ENCODE measurements at regions of chr4 and their contacts with region 1.

Region 1: DNA sequence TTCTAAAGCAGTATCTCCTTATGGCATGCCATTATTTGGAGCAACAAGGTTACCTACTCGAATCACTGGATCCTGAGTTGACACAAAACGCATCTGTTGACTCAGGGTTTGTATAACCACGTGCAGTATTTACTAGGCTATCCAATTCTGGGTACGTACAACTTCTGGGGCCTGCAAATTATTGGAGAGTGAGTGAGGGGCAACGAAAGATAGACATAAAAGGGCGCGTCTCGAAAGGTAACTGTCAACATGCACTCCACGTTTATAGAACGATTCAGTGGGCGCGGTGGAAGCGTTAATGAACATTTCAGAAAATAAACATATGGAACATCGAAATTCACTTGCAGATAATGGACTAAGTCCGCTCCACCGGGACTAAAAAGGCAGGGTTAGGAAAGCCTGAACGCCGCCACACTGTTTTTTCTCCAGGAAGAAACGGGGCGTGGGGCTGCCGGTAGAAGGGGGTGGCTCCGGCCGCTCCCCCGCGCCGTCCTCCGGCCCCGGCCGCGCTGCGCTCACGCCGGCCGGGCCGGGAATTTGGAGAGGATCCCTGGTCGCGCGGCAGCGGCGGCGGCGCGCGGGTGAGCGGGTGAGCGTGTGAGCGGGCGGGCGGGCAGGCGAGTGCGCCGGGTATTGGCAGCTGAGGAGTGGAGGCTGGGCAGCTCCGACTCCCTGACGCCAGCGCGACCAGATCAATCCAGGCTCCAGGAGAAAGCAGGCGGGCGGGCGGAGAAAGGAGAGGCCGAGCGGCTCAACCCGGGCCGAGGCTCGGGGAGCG is at the start of gene SMAD1:
- DNase-seq: peak; percentile 74 to 88 (median 84)
- H3K4me3 ChIP-seq: peak within 1 kb of the TSS; percentile 87
- H3K27ac ChIP-seq: peak within 1 kb of the TSS; percentile 77 to 96
- H3K4me1 ChIP-seq: peaks cover 2% of the 10 kb centered on the region
- H3K27me3 ChIP-seq: no peaks in the 10 kb centered on the region
- CTCF ChIP-seq: no peak
- EP300 ChIP-seq: no peak
- POLR2A ChIP-seq: peak; percentile 32
- total RNA-seq, gene SMAD1: 13.6 to 39.5 (median 19.8) TPM

Region 2: DNA sequence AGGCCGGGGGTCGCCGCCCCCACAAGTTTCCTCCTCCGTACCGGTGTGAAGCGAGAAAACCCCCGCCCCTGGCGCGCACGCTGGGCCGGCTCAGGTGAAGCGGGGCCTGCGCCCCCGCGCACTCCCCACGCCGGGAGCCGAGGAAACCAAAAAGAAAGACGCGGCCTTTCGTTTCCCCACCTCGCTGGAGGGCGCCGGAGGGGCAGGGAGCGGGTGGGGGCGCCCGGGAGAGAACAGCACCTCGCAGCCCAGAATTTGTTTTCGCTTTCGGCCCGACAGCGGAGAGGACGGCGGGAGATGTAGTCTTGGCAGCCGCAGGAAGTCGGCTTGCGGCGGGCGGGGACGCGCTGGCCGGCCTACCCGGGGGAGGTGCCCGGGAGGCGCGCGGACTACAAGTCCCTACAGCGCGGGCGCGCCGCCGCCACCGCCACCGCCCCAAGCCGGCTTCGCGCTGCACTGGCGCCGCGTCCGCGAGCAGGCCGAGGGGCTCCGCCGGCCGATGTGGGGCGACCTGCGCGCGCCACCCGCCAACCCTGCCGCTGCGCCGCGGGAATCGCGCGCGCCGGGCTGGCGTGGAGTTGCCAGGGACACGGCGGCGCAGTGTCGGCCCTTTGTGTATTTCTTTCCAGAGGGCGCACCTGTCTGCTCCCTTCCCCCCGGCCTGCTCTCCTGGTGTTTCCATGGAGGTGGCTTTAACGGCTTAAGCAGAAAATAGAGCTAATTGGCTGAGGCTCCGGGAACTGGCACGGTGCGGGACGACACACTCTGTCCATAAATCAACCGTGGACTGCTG is 300.9 kb before region 1 on chr4 and contains the start of gene OTUD4:
- intact Hi-C with region 1: no loop called
- DNase-seq: peak; percentile 94 to 96 (median 95)
- H3K4me3 ChIP-seq: peak within 1 kb of the TSS; percentile 68
- H3K27ac ChIP-seq: peak within 1 kb of the TSS; percentile 97
- H3K4me1 ChIP-seq: peaks cover 8% of the 10 kb centered on the region
- H3K27me3 ChIP-seq: no peaks in the 10 kb centered on the region
- CTCF ChIP-seq: no peak
- EP300 ChIP-seq: no peak
- POLR2A ChIP-seq: peak; percentile 39
- total RNA-seq, gene OTUD4: 23.5 to 37.1 (median 33.3) TPM

Region 3: GRCh38 chr4:145618932-145619638 is 137.7 kb after region 1 on chr4 and contains the start of gene MMAA:
- intact Hi-C with region 1: loop called in 1 of 4 experiments (anchors 5 kb)
- DNase-seq: peak; percentile 95 to 97 (median 97)
- H3K4me3 ChIP-seq: peak within 1 kb of the TSS; percentile 80
- H3K27ac ChIP-seq: peak within 1 kb of the TSS; percentile 64 to 91
- H3K4me1 ChIP-seq: peaks cover 3% of the 10 kb centered on the region
- H3K27me3 ChIP-seq: no peaks in the 10 kb centered on the region
- CTCF ChIP-seq: peak; percentile 75 to 90 (median 78)
- EP300 ChIP-seq: no peak
- POLR2A ChIP-seq: peak; percentile 91
- total RNA-seq, gene MMAA: 2.1 to 8.6 (median 6.2) TPM